OCI-LY7 (cell line): ENCODE measurements at regions of chr16 and their contacts with region 1.

Region 1: DNA sequence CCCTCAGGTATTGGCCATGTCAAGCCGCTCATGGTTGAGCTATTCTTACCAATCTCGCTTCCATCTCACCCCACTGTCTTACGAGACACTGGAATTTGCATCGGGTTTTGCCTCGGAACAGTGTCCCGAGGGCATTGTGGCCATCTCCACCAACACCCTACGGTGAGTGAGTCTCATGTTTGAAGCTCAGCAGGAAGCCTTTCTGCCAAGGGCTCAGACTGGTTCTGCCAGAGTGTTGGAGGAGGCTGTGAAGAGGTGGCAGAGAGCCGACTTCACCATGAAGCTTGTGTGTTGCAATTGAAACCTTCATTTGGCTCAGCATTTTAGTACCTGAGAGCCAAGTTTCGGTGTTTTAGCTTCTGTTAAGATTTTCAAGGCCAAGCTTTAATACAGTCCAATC is 38.0 kb downstream of the SF3B3 start:
- DNase-seq: no peak
- H3K4me3 ChIP-seq: no peak overlapping the region
- H3K27ac ChIP-seq: no peak overlapping the region
- H3K4me1 ChIP-seq: no peaks in the 10 kb centered on the region
- CTCF ChIP-seq: no peak

Region 2: GRCh38 chr16:70534971-70535370 is 26.7 kb before region 1 on chr16:
- CTCF ChIA-PET with region 1: no interaction called
- POLR2A ChIA-PET with region 1: interaction called, 10 read pairs
- intact Hi-C with region 1: loop called (anchors 2 kb)
- DNase-seq: no peak
- H3K4me3 ChIP-seq: no peak overlapping the region
- H3K27ac ChIP-seq: no peak overlapping the region
- H3K4me1 ChIP-seq: no peaks in the 10 kb centered on the region
- CTCF ChIP-seq: no peak

Region 3: DNA sequence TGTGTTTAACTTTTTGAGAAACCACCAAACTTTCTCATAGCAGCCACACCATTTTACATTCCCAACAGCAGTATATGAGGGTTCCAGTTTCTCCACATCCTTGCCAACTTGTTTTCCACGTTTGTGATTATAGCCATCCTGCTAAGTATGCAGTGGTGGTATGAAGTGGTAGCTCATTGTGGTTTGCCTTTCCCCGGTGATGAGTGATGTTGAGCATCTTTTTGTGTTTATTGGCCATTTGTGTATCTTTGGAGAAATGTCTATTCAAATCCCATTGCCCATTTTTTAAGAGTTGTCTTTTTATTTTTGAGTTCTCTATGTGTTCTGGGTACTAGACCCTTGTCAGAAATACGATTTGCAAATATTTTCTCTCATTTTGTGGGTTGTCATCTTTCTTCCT is 20.6 kb before region 1 on chr16:
- CTCF ChIA-PET with region 1: no interaction called
- POLR2A ChIA-PET with region 1: interaction called, 4 read pairs
- intact Hi-C with region 1: loop called (anchors 2 kb)
- DNase-seq: no peak
- H3K4me3 ChIP-seq: no peak overlapping the region
- H3K27ac ChIP-seq: no peak overlapping the region
- H3K4me1 ChIP-seq: no peaks in the 10 kb centered on the region
- CTCF ChIP-seq: no peak